PC-3 (cell line): ENCODE measurements at regions of chr3 and their contacts with region 1.

Region 1: GRCh38 chr3:64267721-64268604 is 42.7 kb upstream of the PRICKLE2 start:
- DNase-seq: no peak
- ATAC-seq: no peak
- H3K4me3 ChIP-seq: no peak overlapping the region
- H3K27ac ChIP-seq: no peak overlapping the region
- H3K4me1 ChIP-seq: peaks cover 31% of the 10 kb centered on the region
- H3K27me3 ChIP-seq: no peaks in the 10 kb centered on the region
- CTCF ChIP-seq: no peak

Region 2: GRCh38 chr3:64291345-64291744 is 23.4 kb after region 1 on chr3:
- CTCF ChIA-PET with region 1: no interaction called
- POLR2A ChIA-PET with region 1: interaction called, 3 read pairs
- intact Hi-C with region 1: loop called (anchors 2 kb)
- DNase-seq: peak; percentile 84
- ATAC-seq: peak; percentile 87
- H3K4me3 ChIP-seq: no peak overlapping the region
- H3K27ac ChIP-seq: peak overlapping the region; percentile 95
- H3K4me1 ChIP-seq: peaks cover 17% of the 10 kb centered on the region
- H3K27me3 ChIP-seq: no peaks in the 10 kb centered on the region
- CTCF ChIP-seq: no peak

Region 3: DNA sequence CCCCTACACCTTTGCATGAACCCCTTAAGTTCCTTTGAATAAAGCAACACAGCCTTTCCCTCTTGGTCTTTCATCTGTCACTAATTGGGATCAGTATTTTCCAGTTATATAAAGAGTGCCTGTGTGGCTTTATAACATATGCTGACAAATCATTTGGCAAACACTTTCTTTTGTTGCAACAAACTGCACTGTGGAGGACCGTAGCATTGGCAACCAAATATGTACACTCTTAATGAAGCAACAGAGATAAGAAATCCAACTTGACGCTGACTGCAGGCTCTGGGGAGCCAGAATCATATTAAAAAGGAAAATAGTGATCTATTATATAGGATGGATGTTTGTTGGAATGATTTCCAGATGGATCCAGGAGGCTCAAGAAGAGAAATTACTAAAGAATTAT is 77.4 kb after region 1 on chr3:
- CTCF ChIA-PET with region 1: no interaction called
- POLR2A ChIA-PET with region 1: no interaction called
- intact Hi-C with region 1: loop called (anchors 2 kb)
- DNase-seq: peak; percentile 7
- ATAC-seq: peak; percentile 34; the same call in 1 of the 2 replicates
- H3K4me3 ChIP-seq: no peak overlapping the region
- H3K27ac ChIP-seq: 0 out of 2 replicates have a peak overlapping the region, but pooled peaks have one; percentile 53
- H3K4me1 ChIP-seq: peaks cover 32% of the 10 kb centered on the region
- H3K27me3 ChIP-seq: no peaks in the 10 kb centered on the region
- CTCF ChIP-seq: no peak